ENCODE measurements at regions of chr13 and their contacts with region 1.

Region 1: GRCh38 chr13:24982333-24982999 is 113.5 kb upstream of the PABPC3 start:
- DNase-seq: peak in 2 of 3 donors; percentile 4 to 19
- H3K4me3 ChIP-seq: no peak overlapping the region
- H3K4me3 Mint-ChIP-seq: no peak overlapping the region
- H3K27ac ChIP-seq: no peak overlapping the region
- H3K27ac Mint-ChIP-seq: no peak overlapping the region
- H3K4me1 ChIP-seq: peaks cover 6 to 9% of the 10 kb centered on the region in 2 donors
- H3K4me1 Mint-ChIP-seq: peaks cover 7% of the 10 kb centered on the region
- H3K27me3 ChIP-seq: peaks cover 0 to 4% of the 10 kb centered on the region in 2 donors
- H3K27me3 Mint-ChIP-seq: peaks cover 13 to 24% (median 15%) of the 10 kb centered on the region in 3 donors
- CTCF ChIP-seq: no peak

Region 2: GRCh38 chr13:23771552-23771951 is 1210.9 kb before region 1 on chr13:
- intact Hi-C with region 1: no loop called
- DNase-seq: no peak
- H3K4me3 ChIP-seq: no peak overlapping the region
- H3K4me3 Mint-ChIP-seq: no peak overlapping the region
- H3K27ac ChIP-seq: no peak overlapping the region
- H3K27ac Mint-ChIP-seq: no peak overlapping the region
- H3K4me1 ChIP-seq: no peaks in the 10 kb centered on the region
- H3K4me1 Mint-ChIP-seq: peaks cover 2% of the 10 kb centered on the region
- H3K27me3 ChIP-seq: no peaks in the 10 kb centered on the region
- H3K27me3 Mint-ChIP-seq: peaks cover 0 to 2% (median 0%) of the 10 kb centered on the region in 3 donors
- CTCF ChIP-seq: no peak

Region 3: DNA sequence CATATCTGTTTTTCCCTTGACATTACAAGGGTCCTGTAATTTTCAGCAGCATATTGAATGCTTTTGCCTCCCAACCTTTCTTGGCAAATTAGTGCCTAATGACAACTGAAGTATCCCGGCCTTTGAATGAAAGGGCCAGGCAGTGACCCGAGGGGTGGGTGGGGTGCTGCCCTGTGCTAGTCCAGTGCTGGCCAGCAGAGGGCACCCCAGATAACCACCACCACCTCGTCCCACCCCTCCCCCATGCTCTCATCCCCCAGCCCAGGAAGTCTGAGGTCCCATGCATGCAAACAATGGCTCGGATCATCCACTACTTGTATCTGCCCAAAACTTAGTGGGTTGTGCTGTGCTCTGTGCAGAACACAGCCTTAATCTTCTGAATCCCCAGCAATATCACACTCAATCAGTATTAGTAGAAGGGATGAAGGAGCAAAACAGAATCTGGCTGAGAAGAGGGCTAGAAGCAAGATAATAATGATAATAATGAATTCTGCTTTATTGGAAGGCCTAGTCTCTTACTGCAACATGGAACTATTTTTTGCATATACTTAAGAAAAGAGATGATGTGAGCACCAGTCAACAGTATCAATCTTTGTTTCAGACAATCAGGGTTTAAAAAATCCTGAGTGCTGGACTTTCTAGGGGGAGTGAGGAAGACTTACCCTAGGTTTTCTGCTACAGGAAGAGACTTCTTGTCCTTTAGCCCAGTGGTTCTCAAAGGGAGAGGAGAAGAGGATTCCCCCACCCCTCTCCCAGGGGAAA is 298.4 kb before region 1 on chr13:
- intact Hi-C with region 1: loop called in 1 of 2 experiments (anchors 10 kb)
- DNase-seq: peak; percentile 37 to 48 (median 42)
- H3K4me3 ChIP-seq: no peak overlapping the region
- H3K4me3 Mint-ChIP-seq: no peak overlapping the region
- H3K27ac ChIP-seq: no peak overlapping the region
- H3K27ac Mint-ChIP-seq: peak overlapping the region in 1 of 7 donors; percentile 14
- H3K4me1 ChIP-seq: peaks cover 0 to 8% of the 10 kb centered on the region in 2 donors
- H3K4me1 Mint-ChIP-seq: peaks cover 6% of the 10 kb centered on the region
- H3K27me3 ChIP-seq: peaks cover 17 to 26% of the 10 kb centered on the region in 2 donors
- H3K27me3 Mint-ChIP-seq: peaks cover 27 to 41% (median 33%) of the 10 kb centered on the region in 3 donors
- CTCF ChIP-seq: peak; percentile 97

Region 4: GRCh38 chr13:24693862-24694471 is 288.5 kb before region 1 on chr13:
- intact Hi-C with region 1: loop called (anchors 10 kb)
- DNase-seq: peak; percentile 37 to 68 (median 49)
- H3K4me3 ChIP-seq: no peak overlapping the region
- H3K4me3 Mint-ChIP-seq: peak overlapping the region in 1 of 2 donors; percentile 29
- H3K27ac ChIP-seq: no peak overlapping the region
- H3K27ac Mint-ChIP-seq: no peak overlapping the region
- H3K4me1 ChIP-seq: no peaks in the 10 kb centered on the region
- H3K4me1 Mint-ChIP-seq: peaks cover 6% of the 10 kb centered on the region
- H3K27me3 ChIP-seq: peaks cover 0 to 12% of the 10 kb centered on the region in 2 donors
- H3K27me3 Mint-ChIP-seq: peaks cover 7 to 12% (median 11%) of the 10 kb centered on the region in 3 donors
- CTCF ChIP-seq: peak; percentile 60

Region 5: GRCh38 chr13:24922745-24923591 is 59.5 kb before region 1 on chr13:
- intact Hi-C with region 1: no loop called
- DNase-seq: peak; percentile 93 to 96 (median 96)
- H3K4me3 ChIP-seq: peak overlapping the region; percentile 74 to 94 (median 90)
- H3K4me3 Mint-ChIP-seq: peak overlapping the region; percentile 96 to 98
- H3K27ac ChIP-seq: peak overlapping the region; percentile 97 to 99
- H3K27ac Mint-ChIP-seq: peak overlapping the region; percentile 97 to 99 (median 98)
- H3K4me1 ChIP-seq: peaks cover 8 to 12% of the 10 kb centered on the region in 2 donors
- H3K4me1 Mint-ChIP-seq: peaks cover 12% of the 10 kb centered on the region
- H3K27me3 ChIP-seq: no peaks in the 10 kb centered on the region
- H3K27me3 Mint-ChIP-seq: no peaks in the 10 kb centered on the region
- CTCF ChIP-seq: no peak

Measured in CD14-positive monocyte (primary cell).